Activated T-helper 2 cell treated with anti-CD3 and anti-CD28 coated beads, Interferon-gamma antibody, Interleukin-2, Interleukin-4, amounts not matched to agents 10 μg/mL and 5 μg/mL and 100 μg/mL, durations not matched to agents 14 hours and 24 hours and 36 hours (primary cell): ENCODE measurements at regions of chr16 and their contacts with region 1.

Region 1: DNA sequence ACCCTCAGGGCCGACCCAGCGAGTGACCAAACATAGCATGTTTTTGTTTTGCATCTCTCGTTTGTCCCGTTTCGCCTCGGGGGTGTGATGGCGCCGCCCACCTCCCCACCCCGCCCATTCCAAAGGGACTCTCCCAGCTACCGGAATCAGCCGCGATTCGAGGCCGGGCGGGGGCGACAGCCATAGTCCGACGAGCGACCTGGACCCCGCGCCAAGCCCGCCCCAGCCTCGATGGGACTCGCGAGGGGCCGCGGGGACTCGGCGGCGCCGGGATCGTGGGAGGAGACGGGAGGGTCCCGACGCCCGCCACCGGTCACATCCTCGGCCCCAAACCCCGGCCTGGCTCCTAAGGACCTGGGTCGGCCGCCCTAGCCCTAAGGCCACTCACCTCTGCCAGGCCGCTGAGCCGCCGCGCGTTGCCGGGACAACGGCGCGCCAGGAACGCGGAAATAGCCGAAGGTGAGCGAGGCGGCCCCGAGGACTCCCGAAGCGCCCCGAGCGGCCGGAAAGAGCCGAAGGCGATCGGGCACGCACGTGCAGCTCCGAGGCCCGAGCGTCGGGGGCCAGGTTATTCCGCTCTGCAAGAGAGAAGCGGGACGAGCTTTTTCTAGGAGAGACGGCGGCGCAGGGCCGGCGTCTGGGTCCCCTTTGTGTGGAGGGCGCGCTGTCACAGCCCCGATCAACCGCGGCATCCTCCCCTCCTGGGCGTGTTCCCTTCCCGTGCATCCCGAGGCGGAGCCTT is 1.4 kb downstream of the IFT140 start:
- DNase-seq: peak; percentile 90
- H3K4me3 Mint-ChIP-seq: peak overlapping the region; percentile 91
- H3K27ac Mint-ChIP-seq: peak overlapping the region; percentile 99
- H3K4me1 Mint-ChIP-seq: peaks cover 19% of the 10 kb centered on the region
- H3K27me3 Mint-ChIP-seq: no peaks in the 10 kb centered on the region

Region 2: GRCh38 chr16:648781-649589 is 961.5 kb before region 1 on chr16 and contains the start of gene WDR90:
- intact Hi-C with region 1: loop called (anchors 10 kb)
- DNase-seq: peak; percentile 91
- H3K4me3 Mint-ChIP-seq: peak within 1 kb of the TSS; percentile 82
- H3K27ac Mint-ChIP-seq: peak within 1 kb of the TSS; percentile 74
- H3K4me1 Mint-ChIP-seq: peaks cover 4% of the 10 kb centered on the region
- H3K27me3 Mint-ChIP-seq: no peaks in the 10 kb centered on the region
- total RNA-seq, gene WDR90: 73.7 and 77.2 TPM in 2 replicates

Region 3: GRCh38 chr16:1420111-1420540 is 190.3 kb before region 1 on chr16:
- intact Hi-C with region 1: loop called (anchors 2 kb)
- DNase-seq: peak; percentile 16
- H3K4me3 Mint-ChIP-seq: peak overlapping the region; percentile 87
- H3K27ac Mint-ChIP-seq: peak overlapping the region; percentile 98
- H3K4me1 Mint-ChIP-seq: peaks cover 4% of the 10 kb centered on the region
- H3K27me3 Mint-ChIP-seq: no peaks in the 10 kb centered on the region

Region 4: DNA sequence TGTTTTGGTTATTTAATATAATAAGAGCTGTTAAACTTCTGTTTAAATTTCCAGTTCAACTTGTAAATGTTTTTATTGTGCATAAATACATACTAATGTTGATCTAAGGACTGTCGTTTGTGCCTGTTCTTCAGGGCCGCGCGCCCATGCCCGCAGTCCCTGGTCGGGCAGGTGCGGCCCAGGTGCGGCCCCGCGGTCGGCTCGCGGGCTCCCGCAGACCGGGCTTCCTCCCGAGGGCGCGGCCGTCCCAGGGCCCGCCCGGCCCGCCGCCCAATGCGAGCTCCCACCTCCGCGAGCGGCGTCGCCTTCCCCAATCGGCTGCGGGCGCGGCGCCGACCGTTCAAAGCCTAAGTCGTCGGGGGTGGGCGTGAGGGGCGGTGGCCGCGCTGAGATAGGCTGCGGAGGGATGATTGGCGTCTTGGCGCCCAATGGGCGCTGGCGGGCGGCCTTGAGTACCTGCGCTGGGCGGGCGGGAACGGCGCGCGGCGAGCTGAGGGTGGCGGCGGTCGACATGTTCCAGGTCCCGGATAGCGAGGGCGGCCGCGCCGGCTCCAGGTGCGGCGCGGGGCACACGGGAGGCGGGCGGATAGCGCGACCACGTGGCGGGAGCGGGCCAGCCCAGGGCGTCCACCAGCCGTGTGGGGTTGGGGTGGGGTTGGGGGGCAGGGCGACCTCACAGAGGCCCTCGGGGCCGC is 67.5 kb after region 1 on chr16 and contains the start of gene JPT2:
- intact Hi-C with region 1: loop called (anchors 2 kb)
- DNase-seq: peak; percentile 95
- H3K4me3 Mint-ChIP-seq: peak within 1 kb of the TSS; percentile 92
- H3K27ac Mint-ChIP-seq: peak within 1 kb of the TSS; percentile 77
- H3K4me1 Mint-ChIP-seq: peaks cover 20% of the 10 kb centered on the region
- H3K27me3 Mint-ChIP-seq: no peaks in the 10 kb centered on the region
- total RNA-seq, gene JPT2: 95.0 and 98.0 TPM in 2 replicates

Region 5: DNA sequence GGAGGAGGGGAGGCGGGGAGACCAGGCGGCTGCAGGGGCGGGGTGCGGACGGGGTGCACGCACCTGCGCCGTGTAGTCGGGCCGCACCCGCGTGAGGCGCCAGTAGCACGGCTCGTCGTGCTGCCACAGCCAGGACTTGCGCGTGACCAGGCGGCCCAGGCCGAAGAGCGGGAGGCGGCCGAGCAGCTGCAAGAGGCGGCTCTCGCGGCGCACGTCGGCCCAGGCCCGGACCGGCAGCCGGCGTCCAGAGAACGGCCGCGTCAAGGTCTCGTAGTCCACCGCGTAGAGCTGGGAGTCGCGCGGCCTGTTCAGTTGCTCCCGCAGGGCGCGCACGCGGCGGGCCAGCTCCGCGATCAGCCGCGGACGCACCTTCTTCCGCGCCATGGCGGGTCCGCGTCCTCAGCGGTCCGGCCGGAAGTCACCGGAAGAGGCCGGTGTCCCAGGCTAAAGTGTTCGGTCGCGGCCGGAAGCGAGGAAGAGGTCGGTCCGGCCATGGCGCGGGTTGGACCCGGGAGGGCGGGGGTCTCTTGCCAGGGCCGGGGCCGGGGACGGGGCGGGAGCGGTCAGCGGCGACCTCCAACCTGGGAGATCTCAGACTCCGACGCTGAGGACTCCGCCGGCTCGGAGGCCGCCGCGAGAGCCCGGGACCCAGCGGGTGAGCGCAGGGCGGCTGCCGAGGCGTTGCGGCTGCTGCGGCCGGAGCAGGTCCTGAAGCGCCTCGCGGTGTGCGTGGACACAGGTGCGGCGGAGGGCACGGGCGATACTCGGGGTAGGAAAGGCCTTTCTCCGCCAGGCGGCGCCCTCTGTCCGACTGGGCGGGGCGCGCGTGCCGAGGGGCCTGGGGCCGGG is 162.5 kb after region 1 on chr16 and contains the starts of genes EME2 and MRPS34:
- intact Hi-C with region 1: loop called (anchors 5 kb)
- DNase-seq: peak; percentile 80
- H3K4me3 Mint-ChIP-seq: peak within 1 kb of the TSS; percentile 96
- H3K27ac Mint-ChIP-seq: peak within 1 kb of the TSS; percentile 96
- H3K4me1 Mint-ChIP-seq: peaks cover 10% of the 10 kb centered on the region
- H3K27me3 Mint-ChIP-seq: no peaks in the 10 kb centered on the region
- total RNA-seq, gene EME2: 26.1 and 26.2 TPM in 2 replicates
- total RNA-seq, gene MRPS34: 179 and 184 TPM in 2 replicates